Panc1 (cell line): ENCODE measurements at regions of chr19 and their contacts with region 1.

Region 1: GRCh38 chr19:39941615-39942365 is 7.4 kb upstream of the FCGBP start:
- DNase-seq: no peak
- ATAC-seq: no peak
- H3K4me3 ChIP-seq: no peak overlapping the region
- H3K27ac ChIP-seq: no peak overlapping the region
- H3K4me1 ChIP-seq: peaks cover 8% of the 10 kb centered on the region
- H3K27me3 ChIP-seq: peaks cover 34% of the 10 kb centered on the region
- CTCF ChIP-seq: no peak

Region 2: DNA sequence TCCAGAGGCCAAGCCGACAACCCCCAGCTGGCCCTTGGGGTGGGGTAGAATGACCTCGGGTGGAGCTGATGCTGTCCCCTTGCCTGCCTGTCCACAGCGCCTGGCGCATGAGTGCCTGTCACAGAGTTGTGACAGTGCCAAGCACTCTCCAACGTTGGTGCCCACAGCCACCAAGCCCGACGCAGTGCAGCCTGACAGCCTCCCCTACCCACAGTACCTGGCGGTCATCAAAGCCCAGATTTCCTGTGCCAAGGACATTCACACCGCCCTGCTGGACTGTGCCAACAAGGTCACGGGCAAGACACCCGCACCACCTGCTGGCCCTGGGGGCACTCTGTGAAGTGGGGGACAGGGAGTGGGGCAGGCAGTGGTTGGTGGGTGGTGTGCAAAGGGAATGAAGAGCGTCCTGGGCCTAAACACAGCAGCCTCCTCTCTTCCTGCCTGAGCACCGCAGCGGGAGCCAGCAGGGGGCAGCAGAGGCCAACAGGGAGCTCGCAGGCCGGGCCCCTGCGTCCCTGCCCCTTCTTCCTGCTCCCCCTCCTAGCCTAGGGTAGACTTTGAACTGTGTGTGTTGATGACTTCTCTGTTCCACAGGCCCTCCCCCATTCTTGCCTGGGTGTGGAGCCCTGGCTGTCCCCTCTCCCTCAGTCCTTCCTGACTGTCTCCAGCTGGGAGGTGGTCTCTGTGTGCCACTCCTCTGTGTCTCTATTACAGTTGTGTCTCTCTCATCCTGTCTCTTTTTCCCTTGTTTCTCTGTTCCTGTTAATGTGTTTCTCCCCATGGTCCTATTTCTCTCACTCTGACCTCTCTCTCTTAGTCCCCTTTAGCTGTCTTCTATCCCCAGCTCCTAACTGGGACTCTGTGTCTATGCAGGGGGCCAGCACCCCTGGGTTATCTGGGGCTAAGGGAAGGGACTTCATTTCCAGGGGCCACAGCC is 544.2 kb before region 1 on chr19:
- CTCF ChIA-PET with region 1: no interaction called
- POLR2A ChIA-PET with region 1: no interaction called
- in situ Hi-C with region 1: loop called (anchors 5 kb)
- intact Hi-C with region 1: no loop called
- DNase-seq: peak; percentile 100
- ATAC-seq: peak; percentile 78
- H3K4me3 ChIP-seq: no peak overlapping the region
- H3K27ac ChIP-seq: peak overlapping the region; percentile 75
- H3K4me1 ChIP-seq: peaks cover 51% of the 10 kb centered on the region
- H3K27me3 ChIP-seq: no peaks in the 10 kb centered on the region
- CTCF ChIP-seq: no peak

Region 3: GRCh38 chr19:39864118-39864517 is 77.7 kb before region 1 on chr19:
- CTCF ChIA-PET with region 1: no interaction called
- POLR2A ChIA-PET with region 1: interaction called, 12 read pairs
- in situ Hi-C with region 1: loop called (anchors 5 kb)
- intact Hi-C with region 1: no loop called
- DNase-seq: no peak
- ATAC-seq: no peak
- H3K4me3 ChIP-seq: no peak overlapping the region
- H3K27ac ChIP-seq: no peak overlapping the region
- H3K4me1 ChIP-seq: peaks cover 4% of the 10 kb centered on the region
- H3K27me3 ChIP-seq: peaks cover 12% of the 10 kb centered on the region; the same call in 1 of the 2 replicates
- CTCF ChIP-seq: no peak

Region 4: DNA sequence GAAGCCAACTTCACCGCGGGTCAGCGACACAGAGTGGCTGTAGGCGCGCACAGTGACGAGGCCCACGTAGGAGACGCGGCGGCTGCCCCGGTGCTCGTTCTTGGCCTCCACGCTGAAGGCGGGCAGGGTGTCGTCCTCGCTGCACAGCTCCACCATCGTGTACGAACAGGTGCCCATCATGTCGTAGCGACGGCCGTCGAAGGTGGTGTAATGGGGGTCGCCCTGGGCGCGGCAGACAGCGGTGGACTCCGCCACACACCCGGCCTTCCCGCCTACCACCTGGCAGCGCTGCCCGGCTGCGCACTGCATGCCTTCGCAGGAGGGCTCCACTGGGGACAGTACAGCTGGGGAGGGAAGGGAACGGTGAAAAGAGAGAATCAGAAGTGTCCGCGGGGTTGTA is 17.4 kb before region 1 on chr19:
- CTCF ChIA-PET with region 1: interaction called, 6 read pairs
- POLR2A ChIA-PET with region 1: interaction called, 22 read pairs
- in situ Hi-C with region 1: no loop called
- intact Hi-C with region 1: no loop called
- DNase-seq: no peak
- ATAC-seq: peak; percentile 6; the same call in 1 of the 2 replicates
- H3K4me3 ChIP-seq: no peak overlapping the region
- H3K27ac ChIP-seq: no peak overlapping the region
- H3K4me1 ChIP-seq: no peaks in the 10 kb centered on the region
- H3K27me3 ChIP-seq: peaks cover 5% of the 10 kb centered on the region; the same call in 1 of the 2 replicates
- CTCF ChIP-seq: no peak

Region 5: DNA sequence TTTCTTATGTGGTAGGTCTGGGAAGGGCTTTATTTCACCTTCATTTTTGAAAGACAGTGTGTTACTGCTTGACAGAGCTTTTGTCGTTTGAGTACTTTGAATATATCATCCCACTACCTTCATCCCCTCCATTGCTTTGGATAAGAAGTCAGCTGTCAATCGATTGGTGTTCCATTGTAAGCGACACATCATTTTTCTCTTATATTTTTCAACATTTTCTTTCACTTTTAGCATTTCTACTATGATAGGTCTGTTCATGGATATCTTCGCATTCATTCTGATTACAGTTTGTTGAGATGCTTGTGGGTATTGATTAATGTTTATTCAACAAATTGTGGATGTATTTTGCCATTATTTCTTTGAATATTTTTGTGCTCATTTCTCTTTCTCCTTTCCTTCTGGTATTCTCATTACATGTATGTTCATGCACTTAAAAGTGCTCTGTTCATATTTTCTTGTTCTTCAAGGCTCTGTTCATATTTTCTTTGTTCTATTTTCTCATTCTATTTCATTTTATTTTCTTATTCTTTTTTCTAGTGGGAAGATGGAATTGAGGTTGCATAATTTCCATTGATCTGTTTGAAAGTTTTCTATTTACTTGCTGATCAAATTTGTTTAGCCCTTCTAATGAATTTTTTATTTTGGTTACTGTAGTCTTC is 84.3 kb after region 1 on chr19:
- CTCF ChIA-PET with region 1: no interaction called
- POLR2A ChIA-PET with region 1: interaction called, 12 read pairs
- in situ Hi-C with region 1: no loop called
- intact Hi-C with region 1: no loop called
- DNase-seq: no peak
- ATAC-seq: no peak
- H3K4me3 ChIP-seq: no peak overlapping the region
- H3K27ac ChIP-seq: no peak overlapping the region
- H3K4me1 ChIP-seq: no peaks in the 10 kb centered on the region
- H3K27me3 ChIP-seq: no peaks in the 10 kb centered on the region
- CTCF ChIP-seq: no peak

Region 6: GRCh38 chr19:40294560-40294959 is 352.8 kb after region 1 on chr19:
- CTCF ChIA-PET with region 1: no interaction called
- POLR2A ChIA-PET with region 1: no interaction called
- in situ Hi-C with region 1: loop called (anchors 5 kb)
- intact Hi-C with region 1: no loop called
- DNase-seq: no peak
- ATAC-seq: peak; percentile 4
- H3K4me3 ChIP-seq: no peak overlapping the region
- H3K27ac ChIP-seq: no peak overlapping the region
- H3K4me1 ChIP-seq: no peaks in the 10 kb centered on the region
- H3K27me3 ChIP-seq: peaks cover 4% of the 10 kb centered on the region; the same call in 1 of the 2 replicates
- CTCF ChIP-seq: no peak